AG04449 (cell line): ENCODE measurements at regions of chr1 and their contacts with region 1.

Region 1: GRCh38 chr1:67149179-67149770 is 14.5 kb upstream of the C1orf141 start:
- DNase-seq: peak; percentile 28
- H3K4me3 ChIP-seq: no peak overlapping the region
- CTCF ChIP-seq: peak; percentile 80

Region 2: GRCh38 chr1:66981679-66982078 is 167.6 kb before region 1 on chr1:
- CTCF ChIA-PET with region 1: interaction called, 20 read pairs
- POLR2A ChIA-PET with region 1: no interaction called
- DNase-seq: no peak
- H3K4me3 ChIP-seq: no peak overlapping the region
- CTCF ChIP-seq: no peak

Region 3: DNA sequence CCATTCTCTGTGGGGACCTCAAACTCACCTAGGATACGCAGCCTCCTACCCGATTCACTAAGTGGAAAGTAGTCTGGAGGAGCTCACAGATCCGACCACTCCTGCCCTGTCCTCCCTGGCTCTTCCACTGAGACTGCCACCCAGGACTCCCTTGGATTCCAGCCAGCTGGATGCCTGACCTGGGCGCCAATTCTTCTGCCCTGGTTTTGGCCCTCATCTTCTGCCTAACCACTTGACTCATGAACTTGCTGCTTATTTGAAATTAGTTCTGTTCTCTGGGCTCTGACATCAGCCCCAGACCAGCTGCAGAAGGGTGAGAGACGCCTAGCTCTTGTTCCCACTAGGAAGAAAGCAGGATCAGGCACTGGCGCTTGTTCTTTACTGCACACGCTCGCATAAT is 144.2 kb before region 1 on chr1:
- CTCF ChIA-PET with region 1: interaction called, 76 read pairs
- POLR2A ChIA-PET with region 1: no interaction called
- DNase-seq: no peak
- H3K4me3 ChIP-seq: no peak overlapping the region
- CTCF ChIP-seq: no peak

Region 4: DNA sequence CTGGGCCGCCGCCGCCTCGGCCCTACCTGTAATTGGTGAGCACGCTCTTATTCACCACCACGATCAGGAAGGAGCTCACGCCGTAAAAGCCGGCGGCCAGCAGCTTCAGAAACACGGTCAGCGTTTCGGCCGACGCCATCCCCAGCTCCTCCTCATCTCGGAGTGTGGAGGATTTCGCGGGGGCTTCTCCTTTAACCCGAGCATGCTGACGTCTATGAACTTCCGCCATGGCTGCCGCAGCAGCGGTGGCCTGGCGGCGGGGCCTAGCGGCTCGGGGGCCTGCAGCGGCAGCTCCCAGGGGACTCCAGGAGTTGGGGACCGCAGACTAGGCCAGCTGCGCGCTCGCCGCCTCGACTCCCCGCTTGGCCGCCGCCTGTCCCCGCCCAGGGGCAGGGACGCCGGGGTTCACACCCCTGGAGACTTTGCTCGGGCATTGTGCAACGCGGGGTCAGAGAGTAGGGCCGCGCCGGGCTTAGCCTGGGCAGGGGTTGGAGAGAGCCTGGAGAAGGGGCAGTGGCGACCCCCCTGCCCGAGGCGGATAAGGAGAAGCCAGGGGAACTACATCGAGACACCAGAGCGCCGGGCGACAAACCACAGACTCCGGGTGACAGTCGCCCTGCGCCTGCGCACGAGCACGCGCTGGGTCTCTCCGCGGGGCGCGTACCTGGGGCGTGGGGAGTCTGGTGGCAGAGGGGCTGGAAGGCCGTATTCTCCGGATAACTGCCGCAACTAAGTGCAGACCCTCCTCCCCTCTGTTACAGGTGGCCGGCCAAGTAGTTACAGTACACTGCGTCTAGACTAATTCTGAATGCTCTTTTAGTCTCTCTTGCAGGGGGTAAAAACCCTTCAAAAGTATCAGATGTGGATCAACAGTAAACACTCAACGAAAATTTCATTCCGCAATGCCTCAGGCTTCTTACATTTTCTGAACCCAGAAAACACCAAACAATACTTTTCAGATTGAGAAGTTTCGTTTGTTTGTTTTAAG is 95.2 kb before region 1 on chr1 and contains the start of gene SLC35D1:
- CTCF ChIA-PET with region 1: interaction called, 23 read pairs
- POLR2A ChIA-PET with region 1: no interaction called
- DNase-seq: no peak
- H3K4me3 ChIP-seq: peak within 1 kb of the TSS; percentile 83
- CTCF ChIP-seq: no peak

Region 5: DNA sequence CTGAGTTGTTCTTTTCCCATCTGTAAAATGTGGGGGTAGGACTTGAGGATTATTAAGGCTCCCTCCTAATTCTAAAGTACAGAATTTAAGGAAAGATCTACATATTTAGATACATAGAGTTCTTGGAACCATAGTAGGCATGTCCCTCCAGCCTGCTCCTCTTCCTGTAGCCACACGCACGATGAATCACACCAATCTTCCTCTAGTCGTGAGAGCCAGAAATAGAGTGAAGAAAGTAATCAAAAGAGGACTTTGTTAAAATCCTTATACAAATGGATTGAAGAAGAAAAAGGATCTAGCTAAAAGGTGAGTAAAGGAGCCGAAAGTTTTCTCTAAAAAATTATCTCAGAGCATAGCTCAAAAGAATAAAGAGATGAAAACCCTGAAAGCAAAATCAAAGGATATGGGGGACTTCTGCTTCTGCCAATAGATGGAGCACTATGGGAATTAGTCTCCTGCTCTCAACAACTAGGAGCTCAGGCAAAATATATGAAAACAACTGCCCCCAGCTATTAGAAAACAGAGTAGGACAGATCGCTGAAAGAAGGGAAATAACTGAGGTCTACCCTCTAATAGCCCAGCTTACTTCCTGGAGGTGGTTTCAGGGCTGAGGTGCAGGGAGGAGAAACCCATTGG is 23.0 kb before region 1 on chr1:
- CTCF ChIA-PET with region 1: interaction called, 25 read pairs
- POLR2A ChIA-PET with region 1: no interaction called
- DNase-seq: no peak
- H3K4me3 ChIP-seq: no peak overlapping the region
- CTCF ChIP-seq: no peak

Region 6: DNA sequence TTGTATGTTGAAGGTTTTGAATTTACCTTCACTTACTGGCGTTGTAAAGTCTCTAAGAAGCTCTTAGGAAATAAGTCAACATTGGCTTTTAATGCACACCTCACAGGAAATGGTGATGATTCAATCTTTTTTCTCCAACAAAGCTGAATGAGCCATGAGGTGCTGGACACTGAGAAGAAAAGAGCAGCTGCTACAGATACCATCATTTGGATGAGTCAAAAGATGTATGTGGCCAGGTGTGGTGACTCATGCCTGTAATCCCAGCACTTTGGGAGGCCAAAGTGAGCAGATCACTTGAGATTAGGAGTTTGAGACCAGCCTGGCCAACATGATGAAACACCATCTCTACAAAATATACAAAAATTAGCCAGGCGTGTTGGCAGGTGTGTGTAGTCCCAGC is 13.7 kb after region 1 on chr1:
- CTCF ChIA-PET with region 1: interaction called, 19 read pairs
- POLR2A ChIA-PET with region 1: no interaction called
- DNase-seq: no peak
- H3K4me3 ChIP-seq: no peak overlapping the region
- CTCF ChIP-seq: no peak

Region 7: DNA sequence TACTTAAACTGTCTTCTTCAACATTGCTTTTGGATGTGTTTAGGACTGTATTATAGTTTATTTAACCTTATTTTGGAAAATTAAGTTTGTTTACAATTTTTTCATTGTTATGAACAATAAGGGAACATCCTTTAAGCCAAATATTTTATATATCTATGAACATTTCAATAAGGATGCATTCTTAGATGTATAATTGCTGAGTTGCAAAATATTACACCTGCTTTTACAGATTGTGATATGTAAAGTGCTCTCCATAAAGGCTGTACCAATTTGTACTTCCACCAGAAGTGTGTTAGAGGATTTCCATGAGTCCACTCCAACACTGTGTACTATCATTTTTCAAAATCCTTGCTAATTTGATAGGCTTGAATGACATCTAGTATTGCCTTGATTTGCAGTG is 24.7 kb after region 1 on chr1:
- CTCF ChIA-PET with region 1: no interaction called
- POLR2A ChIA-PET with region 1: no interaction called
- DNase-seq: no peak
- H3K4me3 ChIP-seq: no peak overlapping the region
- CTCF ChIP-seq: no peak